Activated CD4-positive, alpha-beta memory T cell treated with anti-CD3 and anti-CD28 coated beads, Interleukin-2, amount 10 ng/mL, durations not matched to agents 7 days and 5 days (primary cell): ENCODE measurements at regions of chr1 and their contacts with region 1.

Region 1: DNA sequence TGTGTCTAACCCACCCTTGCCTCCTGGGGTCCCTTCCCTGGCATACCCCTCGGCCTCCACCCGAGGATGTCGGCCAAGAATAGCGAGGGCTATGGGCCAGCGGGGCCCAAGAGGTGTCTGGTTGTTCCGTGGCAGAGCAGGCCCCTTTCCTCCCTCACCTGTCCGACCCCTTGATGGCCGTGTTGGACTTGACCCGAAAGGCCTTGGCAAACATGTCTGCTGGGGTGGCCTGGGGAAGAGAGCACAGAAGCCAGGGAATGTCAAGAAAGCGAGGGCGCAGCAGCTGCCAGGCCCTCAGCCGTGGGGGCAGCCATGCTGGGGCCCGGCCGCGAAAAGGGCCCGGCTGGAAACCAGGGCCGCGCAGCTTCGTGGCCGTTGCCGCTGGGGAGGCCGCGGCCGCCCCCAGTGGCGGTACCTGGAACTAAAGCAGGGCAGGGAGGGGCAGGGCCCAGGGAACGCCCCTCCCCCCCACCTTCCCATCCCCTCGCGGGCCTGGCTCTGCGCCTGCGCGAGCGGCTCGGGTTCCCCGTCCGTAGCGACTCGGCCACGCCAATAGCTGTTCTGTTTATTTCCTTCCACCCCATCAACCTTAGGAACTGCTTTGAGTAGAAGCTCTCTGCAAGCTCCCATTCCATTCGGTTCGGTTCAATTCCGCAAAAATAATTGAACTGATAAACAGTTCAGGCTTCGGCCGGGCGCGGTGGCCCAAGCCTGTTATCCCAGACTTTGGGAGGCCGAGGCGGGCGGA is at the start of gene EIF2D:
- DNase-seq: peak; percentile 96
- H3K4me3 Mint-ChIP-seq: peak within 1 kb of the TSS; percentile 94
- H3K27ac Mint-ChIP-seq: peak within 1 kb of the TSS; percentile 81
- H3K4me1 Mint-ChIP-seq: peaks cover 41% of the 10 kb centered on the region
- H3K27me3 Mint-ChIP-seq: peaks cover 12% of the 10 kb centered on the region
- total RNA-seq, gene EIF2D: 42.2 to 43.1 TPM

Region 2: DNA sequence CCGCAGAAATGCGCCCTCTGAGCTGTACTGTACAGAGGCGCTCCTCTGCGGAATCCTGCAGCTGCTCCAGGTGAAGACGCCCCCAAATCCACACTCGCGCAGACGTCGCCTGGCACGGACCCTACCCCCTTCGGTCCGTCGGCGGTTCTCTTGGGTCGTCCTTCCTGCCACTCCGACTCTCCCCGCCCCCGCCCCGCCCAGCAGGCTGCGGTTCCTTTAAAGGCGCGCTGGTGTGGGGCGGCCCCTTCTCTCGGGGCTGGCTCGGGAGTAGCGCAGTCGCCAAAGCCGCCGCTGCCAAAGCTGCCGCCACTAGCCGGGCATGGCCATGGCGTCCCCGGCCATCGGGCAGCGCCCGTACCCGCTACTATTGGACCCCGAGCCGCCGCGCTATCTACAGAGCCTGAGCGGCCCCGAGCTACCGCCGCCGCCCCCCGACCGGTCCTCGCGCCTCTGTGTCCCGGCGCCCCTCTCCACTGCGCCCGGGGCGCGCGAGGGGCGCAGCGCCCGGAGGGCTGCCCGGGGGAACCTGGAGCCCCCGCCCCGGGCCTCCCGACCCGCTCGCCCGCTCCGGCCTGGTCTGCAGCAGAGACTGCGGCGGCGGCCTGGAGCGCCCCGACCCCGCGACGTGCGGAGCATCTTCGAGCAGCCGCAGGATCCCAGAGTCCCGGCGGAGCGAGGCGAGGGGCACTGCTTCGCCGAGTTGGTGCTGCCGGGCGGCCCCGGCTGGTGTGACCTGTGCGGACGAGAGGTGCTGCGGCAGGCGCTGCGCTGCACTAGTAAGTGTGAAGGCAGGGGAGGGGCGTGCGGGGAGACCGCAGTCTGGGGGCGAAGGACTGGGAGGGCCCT is 104.8 kb before region 1 on chr1 and contains the start of gene RASSF5:
- CTCF ChIA-PET with region 1: interaction called, 14 read pairs
- POLR2A ChIA-PET with region 1: no interaction called
- DNase-seq: peak; percentile 87
- H3K4me3 Mint-ChIP-seq: peak within 1 kb of the TSS; percentile 67
- H3K27ac Mint-ChIP-seq: no peak within 1 kb of the TSS
- H3K4me1 Mint-ChIP-seq: peaks cover 50% of the 10 kb centered on the region
- H3K27me3 Mint-ChIP-seq: peaks cover 38% of the 10 kb centered on the region
- total RNA-seq, gene RASSF5: 213 to 216 TPM

Region 3: DNA sequence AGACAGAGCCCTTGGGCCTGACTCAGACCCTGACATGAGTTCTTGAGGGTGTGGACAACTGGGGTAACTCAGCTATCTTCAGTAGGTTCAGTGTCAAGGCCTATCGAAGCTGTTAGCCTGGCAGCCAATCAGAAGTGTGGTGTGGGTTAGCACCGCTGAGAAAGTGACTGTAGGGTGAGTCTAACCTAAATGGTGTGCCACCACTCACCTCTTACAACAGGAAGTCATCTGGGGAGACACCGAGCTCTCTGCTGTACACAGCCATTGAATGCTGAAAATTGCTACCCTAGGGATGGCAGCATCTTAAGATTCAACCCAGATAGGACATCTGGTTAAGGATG is 60.3 kb before region 1 on chr1:
- CTCF ChIA-PET with region 1: interaction called, 12 read pairs
- POLR2A ChIA-PET with region 1: interaction called, 6 read pairs
- DNase-seq: peak; percentile 88
- H3K4me3 Mint-ChIP-seq: peak overlapping the region; percentile 57
- H3K27ac Mint-ChIP-seq: peak overlapping the region; percentile 86
- H3K4me1 Mint-ChIP-seq: peaks cover 62% of the 10 kb centered on the region
- H3K27me3 Mint-ChIP-seq: no peaks in the 10 kb centered on the region

Region 4: DNA sequence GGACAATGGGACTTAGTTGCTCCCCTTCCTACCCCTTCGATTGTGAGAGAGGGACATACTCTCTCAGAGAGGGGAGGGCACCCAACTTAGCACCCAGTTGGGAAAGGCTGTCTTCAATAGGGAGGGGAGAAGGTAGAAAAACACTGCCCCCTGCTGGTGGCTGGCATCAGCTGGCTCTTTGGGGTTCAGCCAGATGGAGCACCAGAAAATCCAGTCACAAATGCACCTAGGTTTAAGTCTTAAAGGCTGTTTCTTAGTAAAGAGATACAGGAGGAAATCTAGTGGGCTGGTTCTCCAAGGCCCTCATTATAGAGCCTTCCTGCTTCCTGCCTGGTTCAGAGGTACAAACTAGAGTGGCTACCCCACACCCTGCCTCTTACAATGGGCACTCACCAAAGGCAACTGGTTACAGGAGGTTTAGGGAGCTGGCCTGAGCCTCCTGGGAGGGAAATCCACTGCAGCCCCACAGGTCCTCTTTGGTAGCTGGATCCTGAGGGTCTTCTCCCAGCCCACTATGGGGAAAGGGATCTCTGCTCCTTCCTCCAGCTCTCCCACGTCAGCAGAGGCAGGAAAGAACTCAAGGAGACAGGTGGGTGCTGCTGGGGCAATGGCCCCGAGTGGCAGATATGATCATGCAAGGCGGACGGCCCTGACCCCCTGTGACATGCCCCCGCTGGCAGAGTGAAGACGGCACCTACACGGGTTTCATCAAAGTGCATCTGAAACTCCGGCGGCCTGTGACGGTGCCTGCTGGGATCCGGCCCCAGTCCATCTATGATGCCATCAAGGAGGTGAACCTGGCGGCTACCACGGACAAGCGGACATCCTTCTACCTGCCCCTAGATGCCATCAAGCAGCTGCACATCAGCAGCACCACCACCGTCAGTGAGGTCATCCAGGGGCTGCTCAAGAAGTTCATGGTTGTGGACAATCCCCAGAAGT is 28.3 kb before region 1 on chr1:
- CTCF ChIA-PET with region 1: interaction called, 11 read pairs
- POLR2A ChIA-PET with region 1: interaction called, 10 read pairs
- DNase-seq: peak; percentile 88
- H3K4me3 Mint-ChIP-seq: peak overlapping the region; percentile 63
- H3K27ac Mint-ChIP-seq: peak overlapping the region; percentile 90
- H3K4me1 Mint-ChIP-seq: peaks cover 91% of the 10 kb centered on the region
- H3K27me3 Mint-ChIP-seq: no peaks in the 10 kb centered on the region

Region 5: GRCh38 chr1:206600527-206600926 is 11.8 kb before region 1 on chr1:
- CTCF ChIA-PET with region 1: interaction called, 24 read pairs
- POLR2A ChIA-PET with region 1: no interaction called
- DNase-seq: no peak
- H3K4me3 Mint-ChIP-seq: no peak overlapping the region
- H3K27ac Mint-ChIP-seq: no peak overlapping the region
- H3K4me1 Mint-ChIP-seq: no peaks in the 10 kb centered on the region
- H3K27me3 Mint-ChIP-seq: no peaks in the 10 kb centered on the region

Region 6: GRCh38 chr1:206658264-206658980 is 46.1 kb after region 1 on chr1:
- CTCF ChIA-PET with region 1: interaction called, 50 read pairs
- POLR2A ChIA-PET with region 1: no interaction called
- DNase-seq: peak; percentile 63
- H3K4me3 Mint-ChIP-seq: no peak overlapping the region
- H3K27ac Mint-ChIP-seq: no peak overlapping the region
- H3K4me1 Mint-ChIP-seq: peaks cover 14% of the 10 kb centered on the region
- H3K27me3 Mint-ChIP-seq: peaks cover 25% of the 10 kb centered on the region

Region 7: DNA sequence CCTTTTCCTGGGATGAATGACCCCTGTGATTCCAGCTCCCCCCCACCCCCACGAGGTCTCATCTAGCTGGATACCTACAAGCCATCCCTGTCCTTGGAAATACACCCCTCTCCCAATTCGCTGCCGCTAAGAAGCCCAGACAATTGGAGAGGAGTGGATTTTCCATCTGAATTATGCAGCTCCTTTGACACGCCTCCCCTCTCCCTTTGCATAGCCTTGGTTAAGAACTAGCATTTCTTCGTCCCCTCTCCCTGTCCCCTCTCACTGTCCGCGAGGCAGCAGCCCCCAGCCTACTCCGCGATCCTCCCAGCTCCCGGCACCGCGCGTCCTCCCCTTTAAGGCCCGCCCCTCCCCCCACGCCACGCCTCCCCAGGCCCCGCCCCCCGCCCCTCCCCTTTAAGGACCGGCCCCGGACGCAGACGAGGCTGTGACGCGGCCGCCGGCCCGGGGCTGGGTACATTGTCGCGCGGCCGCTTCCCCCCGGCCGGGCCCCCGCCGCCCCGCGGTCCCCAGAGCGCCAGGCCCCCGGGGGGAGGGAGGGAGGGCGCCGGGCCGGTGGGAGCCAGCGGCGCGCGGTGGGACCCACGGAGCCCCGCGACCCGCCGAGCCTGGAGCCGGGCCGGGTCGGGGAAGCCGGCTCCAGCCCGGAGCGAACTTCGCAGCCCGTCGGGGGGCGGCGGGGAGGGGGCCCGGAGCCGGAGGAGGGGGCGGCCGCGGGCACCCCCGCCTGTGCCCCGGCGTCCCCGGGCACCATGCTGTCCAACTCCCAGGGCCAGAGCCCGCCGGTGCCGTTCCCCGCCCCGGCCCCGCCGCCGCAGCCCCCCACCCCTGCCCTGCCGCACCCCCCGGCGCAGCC is 72.4 kb after region 1 on chr1 and contains the start of gene MAPKAPK2:
- CTCF ChIA-PET with region 1: interaction called, 7 read pairs
- POLR2A ChIA-PET with region 1: interaction called, 11 read pairs
- DNase-seq: peak; percentile 80
- H3K4me3 Mint-ChIP-seq: peak within 1 kb of the TSS; percentile 93
- H3K27ac Mint-ChIP-seq: peak within 1 kb of the TSS; percentile 95
- H3K4me1 Mint-ChIP-seq: peaks cover 42% of the 10 kb centered on the region
- H3K27me3 Mint-ChIP-seq: peaks cover 4% of the 10 kb centered on the region
- total RNA-seq, gene MAPKAPK2: 89.1 to 95.2 TPM